Aorta (tissue), 5 donors: ENCODE measurements at regions of chr20 and their contacts with region 1.

Region 1: DNA sequence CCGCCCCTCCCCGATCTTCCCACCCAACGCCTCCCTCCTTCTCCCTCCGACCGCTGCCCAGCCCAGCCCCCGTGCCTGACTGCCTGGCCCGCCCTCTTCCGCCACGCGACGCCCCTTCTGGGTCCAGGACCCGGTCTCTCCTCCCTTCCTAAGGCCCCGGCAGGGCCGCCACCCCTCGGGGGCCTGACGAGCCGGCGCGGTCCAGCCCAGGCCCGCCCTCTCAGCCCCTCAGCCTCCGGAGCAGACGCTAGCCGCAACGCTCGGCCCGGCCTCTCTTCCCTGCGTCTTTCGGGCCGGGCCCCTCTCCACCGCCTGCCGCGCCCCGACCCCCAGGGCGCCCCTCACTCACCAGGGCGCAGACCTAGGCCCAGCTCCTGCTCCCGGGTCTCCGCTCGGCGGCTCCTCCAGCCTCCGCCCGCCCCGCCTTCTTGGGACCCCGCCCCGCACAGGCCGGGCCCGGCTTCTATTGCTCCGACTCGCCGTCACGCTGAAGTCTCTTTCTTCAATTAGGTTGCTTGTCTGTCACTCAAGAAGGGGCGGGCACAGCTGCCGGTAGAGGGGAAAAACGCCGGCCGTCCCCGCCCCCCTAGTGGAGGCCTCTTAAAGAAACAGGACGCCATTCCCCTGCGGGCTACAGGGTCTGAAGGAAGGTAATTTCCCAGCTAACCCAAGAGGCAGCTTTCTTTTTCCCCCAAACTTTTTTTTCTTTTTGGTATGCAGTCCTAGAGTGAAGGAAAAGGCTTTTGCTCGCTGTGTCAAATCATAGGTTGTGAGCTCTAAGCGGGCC is at the start of gene ELMO2:
- DNase-seq: peak; percentile 98 to 99
- ATAC-seq: peak; percentile 95
- H3K4me3 ChIP-seq: peak within 1 kb of the TSS; percentile 60 to 85
- H3K27ac ChIP-seq: peak within 1 kb of the TSS; percentile 6 to 82
- H3K4me1 ChIP-seq: peaks cover 0 to 4% of the 10 kb centered on the region in 2 donors
- H3K27me3 ChIP-seq: no peaks in the 10 kb centered on the region
- total RNA-seq, gene ELMO2: 47.5 to 51.6 TPM

Region 2: DNA sequence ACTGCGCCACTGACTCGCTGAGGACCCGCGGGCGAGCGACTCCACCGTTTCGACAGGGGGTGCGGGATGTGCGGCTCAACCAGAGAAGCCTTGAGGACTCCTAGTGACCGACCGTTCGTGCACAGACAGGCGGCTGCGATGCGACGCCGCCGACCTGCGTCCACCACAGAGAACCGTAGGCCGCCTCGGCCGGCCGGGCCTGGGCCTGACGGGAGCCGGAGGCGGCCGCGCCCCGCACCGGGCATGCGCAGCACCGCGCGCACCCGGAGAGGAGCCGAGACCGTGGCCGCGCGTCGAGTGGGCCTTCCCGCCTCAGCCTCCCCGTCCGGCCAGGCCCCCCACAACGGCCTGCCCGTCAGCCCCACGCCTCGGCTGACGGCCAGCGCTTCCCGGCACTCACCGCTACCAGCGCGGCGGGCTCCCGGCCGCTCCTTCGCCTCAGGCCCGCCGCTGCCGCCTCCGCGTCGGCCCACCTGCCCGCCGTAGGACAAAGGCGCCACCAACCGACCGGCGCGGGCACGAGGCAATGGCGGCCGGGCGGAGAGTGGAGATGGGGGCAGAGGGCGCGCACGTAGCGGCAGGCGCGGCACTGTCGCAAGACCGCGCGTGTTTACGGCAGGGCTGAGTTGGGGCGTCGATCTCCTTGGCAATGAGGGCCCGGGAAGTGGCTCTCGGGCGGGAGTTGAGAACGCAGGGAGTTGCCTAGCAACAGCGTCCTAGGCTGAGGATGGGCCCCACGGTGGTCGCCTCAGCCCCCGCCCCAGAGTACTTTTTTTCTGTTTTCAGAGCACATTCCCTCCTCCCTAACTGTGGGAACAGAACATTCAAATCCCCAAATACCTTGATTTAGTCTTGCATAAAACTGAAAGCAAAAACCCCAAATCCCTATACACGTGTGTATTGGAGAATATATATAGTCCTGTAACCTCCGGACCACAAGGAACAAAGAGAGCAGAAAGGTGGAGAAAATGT is 316.7 kb before region 1 on chr20 and contains the start of gene NCOA5:
- intact Hi-C with region 1: loop called in 1 of 2 experiments (anchors 2 kb)
- DNase-seq: peak; percentile 98 to 99
- ATAC-seq: peak; percentile 97
- H3K4me3 ChIP-seq: peak within 1 kb of the TSS; percentile 73 to 78
- H3K27ac ChIP-seq: peak within 1 kb of the TSS; percentile 91 to 95
- H3K4me1 ChIP-seq: peaks cover 4 to 5% of the 10 kb centered on the region in 2 donors
- H3K27me3 ChIP-seq: no peaks in the 10 kb centered on the region
- total RNA-seq, gene NCOA5: 18.6 to 23.7 TPM

Region 3: GRCh38 chr20:46363800-46364634 is 42.4 kb before region 1 on chr20:
- intact Hi-C with region 1: loop called in 1 of 2 experiments (anchors 2 kb)
- DNase-seq: peak; percentile 93 to 97
- ATAC-seq: peak; percentile 97
- H3K4me3 ChIP-seq: peak overlapping the region; percentile 66 to 83
- H3K27ac ChIP-seq: peak overlapping the region; percentile 73 to 93
- H3K4me1 ChIP-seq: peaks cover 0 to 3% of the 10 kb centered on the region in 2 donors
- H3K27me3 ChIP-seq: no peaks in the 10 kb centered on the region